CD8-positive, alpha-beta memory T cell (primary cell): ENCODE measurements at regions of chr1 and their contacts with region 1.

Region 1: GRCh38 chr1:116168277-116169097 is 57.3 kb downstream of the MAB21L3 start:
- DNase-seq: peak; percentile 77 to 88 (median 79)
- H3K4me3 ChIP-seq: peak overlapping the region; percentile 73
- H3K4me3 Mint-ChIP-seq: peak overlapping the region; percentile 75 to 92 (median 82)
- H3K27ac ChIP-seq: peak overlapping the region; percentile 5
- H3K27ac Mint-ChIP-seq: peak overlapping the region; percentile 78 to 95 (median 88)
- H3K4me1 ChIP-seq: peaks cover 14% of the 10 kb centered on the region
- H3K4me1 Mint-ChIP-seq: peaks cover 14 to 19% (median 16%) of the 10 kb centered on the region in 3 donors
- H3K27me3 ChIP-seq: peaks cover 3% of the 10 kb centered on the region
- H3K27me3 Mint-ChIP-seq: peaks cover 0 to 1% of the 10 kb centered on the region in 2 donors

Region 2: GRCh38 chr1:116151739-116152576 is 16.5 kb before region 1 on chr1:
- CTCF ChIA-PET with region 1: interaction called, 10 read pairs
- POLR2A ChIA-PET with region 1: no interaction called
- DNase-seq: peak; percentile 68 to 79 (median 76)
- H3K4me3 ChIP-seq: peak overlapping the region; percentile 50
- H3K4me3 Mint-ChIP-seq: peak overlapping the region in 6 of 7 donors; percentile 64 to 78 (median 72)
- H3K27ac ChIP-seq: no peak overlapping the region
- H3K27ac Mint-ChIP-seq: peak overlapping the region; percentile 47 to 90 (median 79)
- H3K4me1 ChIP-seq: peaks cover 18% of the 10 kb centered on the region
- H3K4me1 Mint-ChIP-seq: peaks cover 10 to 18% (median 14%) of the 10 kb centered on the region in 3 donors
- H3K27me3 ChIP-seq: no peaks in the 10 kb centered on the region
- H3K27me3 Mint-ChIP-seq: peaks cover 0 to 4% of the 10 kb centered on the region in 2 donors

Region 3: DNA sequence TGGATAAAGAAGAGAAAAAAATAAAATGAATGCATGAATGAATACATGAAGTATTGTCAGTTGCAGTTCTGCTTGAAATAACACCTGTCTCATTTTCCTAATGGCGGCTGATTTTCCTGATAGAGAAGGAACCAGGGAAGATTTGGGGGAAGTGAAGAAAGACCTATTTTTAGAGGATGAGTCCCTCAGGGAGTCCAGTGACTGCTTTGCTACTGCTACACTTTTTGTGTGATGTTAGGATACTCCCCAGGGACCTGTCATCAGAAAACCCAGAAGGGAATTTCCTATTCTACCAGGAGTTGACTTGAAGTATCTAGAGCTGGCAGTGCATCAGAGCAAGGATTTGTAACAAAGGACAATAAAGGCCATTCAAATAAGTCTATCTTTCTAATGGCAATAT is 57.5 kb after region 1 on chr1:
- CTCF ChIA-PET with region 1: no interaction called
- POLR2A ChIA-PET with region 1: no interaction called
- DNase-seq: no peak
- H3K4me3 ChIP-seq: no peak overlapping the region
- H3K4me3 Mint-ChIP-seq: no peak overlapping the region
- H3K27ac ChIP-seq: no peak overlapping the region
- H3K27ac Mint-ChIP-seq: peak overlapping the region in 1 of 8 donors; percentile 18
- H3K4me1 ChIP-seq: no peaks in the 10 kb centered on the region
- H3K4me1 Mint-ChIP-seq: peaks cover 3 to 10% (median 5%) of the 10 kb centered on the region in 3 donors
- H3K27me3 ChIP-seq: no peaks in the 10 kb centered on the region
- H3K27me3 Mint-ChIP-seq: peaks cover 5 to 14% of the 10 kb centered on the region in 2 donors